Right lobe of liver (tissue), 6 donors: ENCODE measurements at regions of chr9 and their contacts with region 1.

Region 1: GRCh38 chr9:113591001-113591898 is 127.7 kb downstream of the RGS3 start:
- DNase-seq: peak; percentile 81 to 86 (median 83)
- ATAC-seq: peak; percentile 54 to 63 (median 61)
- H3K4me3 ChIP-seq: no peak overlapping the region
- H3K27ac ChIP-seq: peak overlapping the region in 2 of 3 donors; percentile 7 to 22
- H3K4me1 ChIP-seq: peaks cover 0 to 32% (median 9%) of the 10 kb centered on the region in 4 donors
- H3K27me3 ChIP-seq: no peaks in the 10 kb centered on the region
- CTCF ChIP-seq: peak; percentile 88 to 97 (median 94)
- POLR2A ChIP-seq: no peak

Region 2: GRCh38 chr9:113657703-113658544 is 66.7 kb after region 1 on chr9:
- intact Hi-C with region 1: loop called (anchors 2 to 5 kb)
- DNase-seq: peak; percentile 84 to 88 (median 84)
- ATAC-seq: peak; percentile 86 to 93 (median 91)
- H3K4me3 ChIP-seq: no peak overlapping the region
- H3K27ac ChIP-seq: no peak overlapping the region
- H3K4me1 ChIP-seq: peaks cover 0 to 14% (median 2%) of the 10 kb centered on the region in 4 donors
- H3K27me3 ChIP-seq: no peaks in the 10 kb centered on the region
- CTCF ChIP-seq: peak; percentile 96 to 98 (median 97)
- POLR2A ChIP-seq: no peak